ENCODE measurements at regions of chr9 and their contacts with region 1.

Region 1: GRCh38 chr9:71703172-71703872 is 65.0 kb downstream of the CEMIP2 start:
- DNase-seq: no peak
- H3K4me3 ChIP-seq: no peak overlapping the region
- H3K27ac ChIP-seq: no peak overlapping the region
- H3K4me1 ChIP-seq: no peaks in the 10 kb centered on the region
- H3K27me3 ChIP-seq: no peaks in the 10 kb centered on the region
- CTCF ChIP-seq: no peak
- POLR2A ChIP-seq: no peak

Region 2: DNA sequence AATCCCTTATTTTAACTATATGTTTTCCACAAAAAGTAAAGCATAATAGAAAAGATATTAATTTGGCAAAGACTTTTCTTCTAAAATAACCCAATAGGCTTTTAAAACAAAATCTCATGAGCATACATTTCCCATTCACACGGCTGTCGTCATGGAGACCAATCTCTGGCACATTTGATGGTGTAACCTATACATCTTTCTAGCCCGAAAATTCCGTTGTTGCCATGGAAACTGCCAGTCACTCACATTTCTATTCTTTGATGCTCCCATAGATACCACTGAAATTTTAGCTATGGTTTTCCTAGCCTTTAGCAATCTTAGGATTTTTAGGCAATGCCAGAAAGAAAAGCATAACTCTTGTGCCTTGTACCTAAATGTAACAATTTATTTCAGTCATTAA is 319.0 kb before region 1 on chr9:
- CTCF ChIA-PET with region 1: no interaction called
- POLR2A ChIA-PET with region 1: no interaction called
- dilution Hi-C with region 1: no loop called
- intact Hi-C with region 1: no loop called
- DNase-seq: no peak
- H3K4me3 ChIP-seq: no peak overlapping the region
- H3K27ac ChIP-seq: no peak overlapping the region
- H3K4me1 ChIP-seq: no peaks in the 10 kb centered on the region
- H3K27me3 ChIP-seq: no peaks in the 10 kb centered on the region
- CTCF ChIP-seq: no peak
- POLR2A ChIP-seq: no peak

Region 3: GRCh38 chr9:71663931-71664459 is 39.3 kb before region 1 on chr9:
- CTCF ChIA-PET with region 1: no interaction called
- POLR2A ChIA-PET with region 1: no interaction called
- dilution Hi-C with region 1: no loop called
- intact Hi-C with region 1: loop called (anchors 1 kb)
- DNase-seq: no peak
- H3K4me3 ChIP-seq: no peak overlapping the region
- H3K27ac ChIP-seq: no peak overlapping the region
- H3K4me1 ChIP-seq: no peaks in the 10 kb centered on the region
- H3K27me3 ChIP-seq: no peaks in the 10 kb centered on the region
- CTCF ChIP-seq: no peak
- POLR2A ChIP-seq: no peak

Measured in endothelial cell of umbilical vein (primary cell).